H1 (cell line): ENCODE measurements at regions of chr22 and their contacts with region 1.

Region 1: DNA sequence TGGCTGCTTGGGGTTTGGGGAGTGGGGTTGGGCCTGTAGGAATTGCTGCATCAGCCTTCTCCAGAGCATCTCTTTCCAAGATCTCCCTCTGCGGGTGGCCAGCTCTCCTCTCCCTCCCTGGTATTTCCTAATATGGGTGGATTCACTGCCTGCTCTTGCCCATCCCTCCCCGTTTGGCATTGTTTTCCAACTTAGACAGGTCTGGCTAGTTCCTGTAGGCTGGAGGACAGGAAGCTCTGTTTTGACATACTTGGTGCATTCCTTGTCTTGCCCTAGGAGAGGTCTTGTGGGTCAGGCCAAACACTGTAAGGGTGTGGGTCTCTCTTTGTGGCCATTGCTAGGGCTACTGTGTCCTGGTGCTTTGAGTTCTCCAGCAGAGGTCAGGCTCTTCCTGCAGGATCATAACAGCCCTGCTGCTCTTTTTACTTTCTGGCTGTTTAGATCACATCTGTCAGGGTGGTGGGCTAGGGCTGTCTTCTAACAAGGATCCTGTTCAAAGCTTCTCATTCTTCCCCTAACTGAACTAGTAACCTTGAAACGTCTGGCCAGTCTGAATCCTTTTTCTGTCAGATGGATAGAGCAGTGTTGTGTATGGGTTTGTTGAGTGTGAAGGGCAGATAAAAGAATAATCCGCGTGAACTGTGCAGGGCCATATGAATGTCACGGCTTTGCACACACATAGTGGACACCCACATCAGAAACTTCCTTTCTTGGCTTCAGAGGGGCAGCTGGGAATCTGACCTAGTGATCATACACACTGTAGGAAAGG is 18.3 kb upstream of the MICALL1 start:
- DNase-seq: no peak
- H3K4me3 ChIP-seq: no peak overlapping the region
- H3K27ac ChIP-seq: peak overlapping the region; percentile 6; the same call in 1 of the 2 replicates
- H3K4me1 ChIP-seq: no peaks in the 10 kb centered on the region
- H3K27me3 ChIP-seq: no peaks in the 10 kb centered on the region
- CTCF ChIP-seq: peak; percentile 33 to 58 (median 56)
- EP300 ChIP-seq: no peak
- POLR2A ChIP-seq: no peak
- RAD21 ChIP-seq: peak; percentile 58 to 75

Region 2: GRCh38 chr22:37792494-37792893 is 95.3 kb before region 1 on chr22:
- CTCF ChIA-PET with region 1: no interaction called
- POLR2A ChIA-PET with region 1: no interaction called
- DNase-seq: no peak
- H3K4me3 ChIP-seq: no peak overlapping the region
- H3K27ac ChIP-seq: no peak overlapping the region
- H3K4me1 ChIP-seq: no peaks in the 10 kb centered on the region
- H3K27me3 ChIP-seq: peaks cover 0 to 6% (median under 1%) of the 10 kb centered on the region in 4 experiments; a peak in 2 of 7 replicates
- CTCF ChIP-seq: no peak
- EP300 ChIP-seq: no peak
- POLR2A ChIP-seq: no peak
- RAD21 ChIP-seq: no peak

Region 3: GRCh38 chr22:37855462-37855861 is 32.3 kb before region 1 on chr22:
- CTCF ChIA-PET with region 1: interaction called, 6 read pairs
- POLR2A ChIA-PET with region 1: interaction called, 10 read pairs
- DNase-seq: no peak
- H3K4me3 ChIP-seq: no peak overlapping the region
- H3K27ac ChIP-seq: no peak overlapping the region
- H3K4me1 ChIP-seq: no peaks in the 10 kb centered on the region
- H3K27me3 ChIP-seq: no peaks in the 10 kb centered on the region
- CTCF ChIP-seq: no peak
- EP300 ChIP-seq: no peak
- POLR2A ChIP-seq: no peak
- RAD21 ChIP-seq: no peak

Region 4: DNA sequence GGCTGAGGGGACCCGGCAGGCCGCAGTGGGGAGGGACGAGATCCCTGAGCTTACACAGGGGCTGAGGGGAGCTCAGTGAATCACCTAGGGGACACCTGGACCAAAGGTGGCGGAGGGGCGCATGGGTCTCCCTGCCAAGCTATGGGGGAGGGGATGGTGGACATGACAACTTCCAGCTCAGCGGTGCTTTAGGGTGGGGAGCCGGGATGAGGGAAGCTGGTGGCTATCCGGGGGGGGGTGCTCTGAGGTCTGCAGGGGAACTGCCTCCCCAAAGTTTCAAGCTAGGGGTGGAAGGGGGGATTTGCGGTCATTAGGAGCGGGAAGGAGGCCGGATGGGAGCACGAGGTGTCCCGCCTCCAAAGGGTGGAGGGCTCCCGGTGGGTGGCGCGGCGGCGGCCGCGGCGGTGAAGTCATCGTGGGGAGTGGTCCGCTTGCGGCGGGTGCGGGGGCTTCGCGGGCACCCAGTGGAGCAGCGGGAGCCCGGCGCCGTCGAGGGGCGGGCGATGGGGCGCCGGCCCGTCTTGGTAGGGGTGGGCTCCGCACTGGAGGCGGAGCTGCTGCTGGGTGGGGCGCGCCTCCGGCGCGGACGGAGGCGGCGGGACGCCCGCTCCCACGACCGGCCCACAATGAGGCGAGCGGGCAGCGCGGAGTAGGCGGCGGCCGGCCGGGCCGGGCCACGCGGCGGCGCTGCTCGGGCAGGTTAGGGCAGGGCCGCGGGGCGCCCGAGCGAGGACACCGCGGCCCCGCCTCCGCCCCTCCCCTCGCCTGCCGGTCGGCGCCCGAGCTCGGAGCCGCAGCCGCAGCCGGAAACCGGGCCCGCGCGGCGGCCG is 18.0 kb after region 1 on chr22 and contains the start of gene MICALL1:
- CTCF ChIA-PET with region 1: interaction called, 27 read pairs
- POLR2A ChIA-PET with region 1: interaction called, 150 read pairs
- DNase-seq: peak in 1 of 2 experiments; percentile 84
- H3K4me3 ChIP-seq: peak within 1 kb of the TSS; percentile 45 to 74 (median 59)
- H3K27ac ChIP-seq: peak within 1 kb of the TSS; percentile 56; the same call in 1 of the 2 replicates
- H3K4me1 ChIP-seq: peaks cover 0 to 22% (median 16%) of the 10 kb centered on the region in 4 experiments; a peak in 6 of 7 replicates
- H3K27me3 ChIP-seq: no peaks in the 10 kb centered on the region
- CTCF ChIP-seq: peak; percentile 36 to 46 (median 42); a peak in 3 of 4 replicates
- EP300 ChIP-seq: no peak
- POLR2A ChIP-seq: 0 out of 3 replicates have a peak, but pooled peaks of 1 of the 2 experiments have one; percentile 23
- RAD21 ChIP-seq: peak in 1 of 2 experiments; percentile 37; a peak in 2 of 4 replicates
- total RNA-seq, gene MICALL1: 25.8 and 32.1 TPM in 2 replicates

Region 5: GRCh38 chr22:37910890-37911743 is 23.3 kb after region 1 on chr22:
- CTCF ChIA-PET with region 1: interaction called, 27 read pairs
- POLR2A ChIA-PET with region 1: interaction called, 150 read pairs
- DNase-seq: no peak
- H3K4me3 ChIP-seq: no peak overlapping the region
- H3K27ac ChIP-seq: no peak overlapping the region
- H3K4me1 ChIP-seq: peaks cover 0 to 26% (median 15%) of the 10 kb centered on the region in 4 experiments; a peak in 6 of 7 replicates
- H3K27me3 ChIP-seq: no peaks in the 10 kb centered on the region
- CTCF ChIP-seq: no peak
- EP300 ChIP-seq: no peak
- POLR2A ChIP-seq: peak in 1 of 2 experiments; percentile 27; a peak in 1 of 3 replicates
- RAD21 ChIP-seq: no peak

Region 6: DNA sequence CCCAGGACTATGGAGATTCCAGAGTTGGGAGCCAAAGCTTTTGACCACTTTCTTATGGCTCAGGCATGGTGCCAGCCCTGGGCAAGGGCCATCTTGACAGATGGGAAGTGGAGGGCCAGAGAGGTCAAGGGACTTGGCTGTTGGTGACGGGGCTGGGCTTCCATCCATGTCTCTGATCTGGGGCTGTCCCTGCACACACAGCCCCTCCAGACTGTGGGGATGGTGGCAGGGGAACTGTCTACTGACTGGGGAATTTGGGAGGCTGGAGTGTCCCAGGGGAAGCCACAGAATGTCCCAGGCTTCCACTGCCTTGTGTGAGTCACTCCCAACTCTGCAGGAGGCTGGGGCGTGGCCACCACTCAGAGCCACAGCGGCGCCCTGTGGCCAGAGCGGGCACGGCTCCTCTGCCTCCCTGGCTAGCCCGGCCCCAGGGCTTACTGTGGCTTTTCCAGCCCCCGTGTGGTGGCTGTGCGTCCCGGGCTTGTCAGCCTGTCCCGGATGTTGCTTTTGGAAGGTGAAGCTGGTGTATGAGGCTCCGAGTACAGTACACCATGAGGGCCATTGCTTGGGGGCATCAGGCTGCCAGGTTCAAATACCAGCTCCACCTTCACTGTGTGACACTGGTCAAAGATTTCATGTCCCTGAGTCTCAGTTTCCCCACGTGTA is 46.0 kb after region 1 on chr22:
- CTCF ChIA-PET with region 1: interaction called, 158 read pairs
- POLR2A ChIA-PET with region 1: interaction called, 4 read pairs
- DNase-seq: peak; percentile 73 to 98
- H3K4me3 ChIP-seq: no peak overlapping the region
- H3K27ac ChIP-seq: no peak overlapping the region
- H3K4me1 ChIP-seq: peaks cover 0 to 5% (median 3%) of the 10 kb centered on the region in 4 experiments; a peak in 5 of 7 replicates
- H3K27me3 ChIP-seq: no peaks in the 10 kb centered on the region
- CTCF ChIP-seq: peak; percentile 99
- EP300 ChIP-seq: no peak
- POLR2A ChIP-seq: no peak
- RAD21 ChIP-seq: peak; percentile 62 to 74

Region 7: DNA sequence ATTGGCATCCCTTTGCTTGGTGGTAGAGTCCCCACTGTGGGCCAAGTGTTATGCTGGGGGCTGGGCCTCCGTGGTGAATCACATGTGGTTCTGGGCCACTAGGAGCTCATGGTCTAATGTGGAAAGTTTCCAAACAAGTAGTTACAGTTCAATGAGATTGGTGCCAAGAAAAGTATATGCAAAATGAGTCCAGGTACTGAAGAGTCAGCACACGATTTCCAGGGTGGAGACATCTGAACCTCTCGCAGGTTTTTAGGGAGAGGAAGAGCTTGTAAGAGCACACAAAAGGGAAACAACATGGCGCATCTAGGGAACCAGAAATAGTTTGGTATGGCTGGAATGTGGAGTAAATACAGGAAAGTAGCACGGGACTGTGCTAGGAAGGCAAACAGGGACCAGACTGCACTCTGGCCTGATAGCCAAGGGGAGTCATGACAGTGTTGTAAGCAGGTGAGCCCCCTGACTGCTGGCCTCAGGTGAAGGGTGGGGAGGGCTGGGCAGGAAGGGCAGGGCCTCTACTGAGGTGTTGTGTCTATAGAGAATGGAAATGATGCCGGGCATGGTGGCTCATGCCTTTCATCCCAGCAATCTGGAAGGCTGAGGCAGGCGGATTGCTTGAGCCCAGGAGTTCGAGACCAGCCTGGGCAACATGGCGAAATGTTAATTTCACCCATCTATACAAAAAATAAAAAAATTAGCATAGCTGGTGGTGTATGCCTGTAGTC is 78.3 kb after region 1 on chr22:
- CTCF ChIA-PET with region 1: interaction called, 12 read pairs
- POLR2A ChIA-PET with region 1: no interaction called
- DNase-seq: no peak
- H3K4me3 ChIP-seq: no peak overlapping the region
- H3K27ac ChIP-seq: no peak overlapping the region
- H3K4me1 ChIP-seq: peaks cover 0 to 5% (median 3%) of the 10 kb centered on the region in 4 experiments; a peak in 4 of 7 replicates
- H3K27me3 ChIP-seq: no peaks in the 10 kb centered on the region
- CTCF ChIP-seq: no peak
- EP300 ChIP-seq: no peak
- POLR2A ChIP-seq: no peak
- RAD21 ChIP-seq: no peak

Region 8: DNA sequence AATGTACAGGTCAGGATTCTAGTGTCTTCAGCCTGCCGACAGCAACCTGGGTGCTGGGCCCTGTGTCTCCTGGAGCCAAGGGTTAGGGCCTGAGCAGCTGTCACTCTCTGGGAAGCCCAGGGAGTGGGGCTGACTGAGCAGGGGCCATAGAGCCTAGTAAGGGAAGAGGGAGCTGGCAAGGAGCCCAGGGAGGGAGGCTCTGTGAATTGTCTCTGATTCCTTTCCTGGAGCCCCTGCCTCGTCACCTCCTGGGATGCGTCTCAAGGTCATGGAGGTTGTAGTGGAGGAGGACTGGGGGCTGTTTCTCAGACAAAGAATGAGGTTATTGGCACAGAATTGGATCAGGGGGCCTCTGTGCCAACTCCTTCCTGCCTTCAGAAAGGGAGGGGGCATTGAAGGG is 84.7 kb after region 1 on chr22:
- CTCF ChIA-PET with region 1: interaction called, 10 read pairs
- POLR2A ChIA-PET with region 1: no interaction called
- DNase-seq: no peak
- H3K4me3 ChIP-seq: no peak overlapping the region
- H3K27ac ChIP-seq: 0 out of 2 replicates have a peak overlapping the region, but pooled peaks have one; percentile 11
- H3K4me1 ChIP-seq: peaks cover 6 to 20% (median 11%) of the 10 kb centered on the region in 4 experiments
- H3K27me3 ChIP-seq: no peaks in the 10 kb centered on the region
- CTCF ChIP-seq: no peak
- EP300 ChIP-seq: no peak
- POLR2A ChIP-seq: no peak
- RAD21 ChIP-seq: no peak

Region 9: GRCh38 chr22:38051900-38052862 is 164.4 kb after region 1 on chr22:
- CTCF ChIA-PET with region 1: no interaction called
- POLR2A ChIA-PET with region 1: no interaction called
- DNase-seq: peak; percentile 81 to 89
- H3K4me3 ChIP-seq: no peak overlapping the region
- H3K27ac ChIP-seq: no peak overlapping the region
- H3K4me1 ChIP-seq: peaks cover 0 to 15% (median 4%) of the 10 kb centered on the region in 4 experiments; a peak in 5 of 7 replicates
- H3K27me3 ChIP-seq: no peaks in the 10 kb centered on the region; a peak in 1 of 7 replicates
- CTCF ChIP-seq: peak; percentile 87 to 97 (median 94)
- EP300 ChIP-seq: peak in 1 of 2 experiments; percentile 21; a peak in 1 of 3 replicates
- POLR2A ChIP-seq: no peak
- RAD21 ChIP-seq: peak; percentile 92 to 95